Gastrocnemius medialis (tissue), 4 donors: ENCODE measurements at regions of chr15 and their contacts with region 1.

Region 1: GRCh38 chr15:41999290-42000285 is 21.3 kb downstream of the PLA2G4E start:
- DNase-seq: no peak
- ATAC-seq: no peak
- H3K4me3 ChIP-seq: no peak overlapping the region
- H3K27ac ChIP-seq: no peak overlapping the region
- H3K4me1 ChIP-seq: peaks cover 15 to 19% of the 10 kb centered on the region in 2 donors
- H3K27me3 ChIP-seq: no peaks in the 10 kb centered on the region
- CTCF ChIP-seq: no peak
- POLR2A ChIP-seq: no peak

Region 2: GRCh38 chr15:42056934-42057779 is 57.6 kb after region 1 on chr15:
- in situ Hi-C with region 1: loop called (anchors 5 to 10 kb)
- intact Hi-C with region 1: no loop called
- DNase-seq: peak; percentile 58 to 80
- ATAC-seq: peak; percentile 67 to 78
- H3K4me3 ChIP-seq: peak overlapping the region; percentile 28 to 45 (median 36)
- H3K27ac ChIP-seq: peak overlapping the region; percentile 32 to 61 (median 56)
- H3K4me1 ChIP-seq: peaks cover 32 to 36% of the 10 kb centered on the region in 2 donors
- H3K27me3 ChIP-seq: no peaks in the 10 kb centered on the region
- CTCF ChIP-seq: peak; percentile 65 to 81 (median 76)
- POLR2A ChIP-seq: no peak